A549 (cell line): ENCODE measurements at regions of chr16 and their contacts with region 1.

Region 1: DNA sequence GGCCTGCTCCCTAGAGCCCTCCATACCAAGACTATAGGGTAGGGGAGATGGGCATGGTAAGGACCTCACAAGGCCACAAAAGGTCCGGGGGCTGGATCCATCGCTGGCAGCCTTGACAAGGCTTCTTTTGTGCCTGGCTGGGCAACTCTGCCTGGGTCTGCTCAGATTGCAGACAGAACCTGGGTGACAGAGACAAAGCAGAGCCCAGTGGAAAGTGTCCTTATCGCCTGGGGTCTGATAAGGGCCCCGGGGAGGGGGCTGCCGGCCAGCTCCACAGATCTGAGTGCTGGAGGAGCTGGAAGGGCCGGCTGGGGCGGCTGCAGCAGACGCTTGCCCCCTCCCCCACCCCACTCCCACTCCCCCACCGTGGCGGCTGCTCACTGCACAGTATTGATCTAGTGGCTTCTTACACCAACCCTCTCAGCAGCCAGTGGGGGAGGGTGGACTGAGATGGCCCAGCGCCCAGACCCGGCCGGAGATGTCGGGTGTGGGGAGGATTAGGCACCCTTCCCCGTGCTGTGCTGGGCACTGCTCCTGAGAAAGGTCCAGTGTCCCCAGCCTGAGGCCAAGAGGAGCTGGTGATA is 7.2 kb downstream of the MMP15 start:
- DNase-seq: no peak
- ATAC-seq: no peak
- H3K4me3 ChIP-seq: no peak overlapping the region
- H3K27ac ChIP-seq: no peak overlapping the region
- H3K4me1 ChIP-seq: peaks cover 8% of the 10 kb centered on the region; the same call in 2 of the 3 replicates
- CTCF ChIP-seq: no peak
- EP300 ChIP-seq: no peak
- POLR2A ChIP-seq: no peak
- RAD21 ChIP-seq: no peak

Region 2: GRCh38 chr16:57966133-57966805 is 66.5 kb before region 1 on chr16:
- CTCF ChIA-PET with region 1: no interaction called
- POLR2A ChIA-PET with region 1: no interaction called
- DNase-seq: no peak
- ATAC-seq: peak in 1 of 2 experiments; percentile 55; a peak in 3 of 6 replicates
- H3K4me3 ChIP-seq: no peak overlapping the region
- H3K27ac ChIP-seq: peak overlapping the region in 1 of 2 experiments; percentile 54; a peak in 3 of 6 replicates
- H3K4me1 ChIP-seq: peaks cover 15% of the 10 kb centered on the region; the same call in 2 of the 3 replicates
- CTCF ChIP-seq: no peak
- EP300 ChIP-seq: no peak
- POLR2A ChIP-seq: no peak
- RAD21 ChIP-seq: no peak

Region 3: DNA sequence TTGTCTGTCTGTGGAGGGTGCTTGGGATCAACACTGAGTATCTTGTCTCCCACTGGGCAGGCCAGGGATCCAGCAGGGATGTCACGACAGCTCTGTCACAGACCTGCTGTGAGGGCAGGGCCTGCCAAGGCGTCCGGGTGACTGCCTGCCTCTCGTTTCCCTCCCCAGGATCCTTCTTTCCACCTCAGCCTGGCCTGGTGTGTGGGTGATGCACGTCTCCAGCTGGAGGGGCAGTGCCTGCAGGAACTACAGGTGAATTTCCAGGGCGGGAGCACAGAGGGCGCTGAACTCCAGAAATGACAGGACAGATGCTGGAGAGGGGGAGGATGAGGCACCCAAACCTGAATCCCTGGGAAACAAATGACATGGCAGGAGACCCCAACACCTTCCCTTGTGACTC is 14.0 kb before region 1 on chr16:
- CTCF ChIA-PET with region 1: interaction called, 10 read pairs
- POLR2A ChIA-PET with region 1: no interaction called
- DNase-seq: no peak
- ATAC-seq: peak in 1 of 2 experiments; percentile 41; a peak in 2 of 6 replicates
- H3K4me3 ChIP-seq: no peak overlapping the region
- H3K27ac ChIP-seq: no peak overlapping the region
- H3K4me1 ChIP-seq: peaks cover 13% of the 10 kb centered on the region; the same call in 1 of the 3 replicates
- CTCF ChIP-seq: 0 out of 3 replicates have a peak, but pooled peaks have one; percentile 6
- EP300 ChIP-seq: no peak
- POLR2A ChIP-seq: no peak
- RAD21 ChIP-seq: no peak

Region 4: GRCh38 chr16:58063377-58064076 is 30.7 kb after region 1 on chr16:
- CTCF ChIA-PET with region 1: interaction called, 16 read pairs
- POLR2A ChIA-PET with region 1: no interaction called
- DNase-seq: no peak
- ATAC-seq: peak; percentile 47 to 56; a peak in 3 of 6 replicates
- H3K4me3 ChIP-seq: no peak overlapping the region
- H3K27ac ChIP-seq: no peak overlapping the region
- H3K4me1 ChIP-seq: no peaks in the 10 kb centered on the region
- CTCF ChIP-seq: no peak
- EP300 ChIP-seq: no peak
- POLR2A ChIP-seq: no peak
- RAD21 ChIP-seq: no peak

Region 5: GRCh38 chr16:58129097-58129936 is 96.5 kb after region 1 on chr16 and contains the start of gene CFAP20:
- CTCF ChIA-PET with region 1: interaction called, 13 read pairs
- POLR2A ChIA-PET with region 1: interaction called, 13 read pairs
- DNase-seq: peak; percentile 91 to 100
- ATAC-seq: peak; percentile 92 to 96
- H3K4me3 ChIP-seq: peak within 1 kb of the TSS; percentile 96
- H3K27ac ChIP-seq: peak within 1 kb of the TSS; percentile 85 to 88
- H3K4me1 ChIP-seq: peaks cover 21% of the 10 kb centered on the region
- CTCF ChIP-seq: no peak
- EP300 ChIP-seq: no peak
- POLR2A ChIP-seq: peak; percentile 84
- RAD21 ChIP-seq: no peak
- polyA plus RNA-seq, gene CFAP20: 51.0 and 53.1 TPM in 2 replicates